ENCODE measurements at regions of chr10 and their contacts with region 1.

Region 1: GRCh38 chr10:132643709-132644526 is 106.3 kb downstream of the INPP5A start:
- DNase-seq: peak in 15 of 42 donors; percentile 2 to 62 (median 30)

Region 2: DNA sequence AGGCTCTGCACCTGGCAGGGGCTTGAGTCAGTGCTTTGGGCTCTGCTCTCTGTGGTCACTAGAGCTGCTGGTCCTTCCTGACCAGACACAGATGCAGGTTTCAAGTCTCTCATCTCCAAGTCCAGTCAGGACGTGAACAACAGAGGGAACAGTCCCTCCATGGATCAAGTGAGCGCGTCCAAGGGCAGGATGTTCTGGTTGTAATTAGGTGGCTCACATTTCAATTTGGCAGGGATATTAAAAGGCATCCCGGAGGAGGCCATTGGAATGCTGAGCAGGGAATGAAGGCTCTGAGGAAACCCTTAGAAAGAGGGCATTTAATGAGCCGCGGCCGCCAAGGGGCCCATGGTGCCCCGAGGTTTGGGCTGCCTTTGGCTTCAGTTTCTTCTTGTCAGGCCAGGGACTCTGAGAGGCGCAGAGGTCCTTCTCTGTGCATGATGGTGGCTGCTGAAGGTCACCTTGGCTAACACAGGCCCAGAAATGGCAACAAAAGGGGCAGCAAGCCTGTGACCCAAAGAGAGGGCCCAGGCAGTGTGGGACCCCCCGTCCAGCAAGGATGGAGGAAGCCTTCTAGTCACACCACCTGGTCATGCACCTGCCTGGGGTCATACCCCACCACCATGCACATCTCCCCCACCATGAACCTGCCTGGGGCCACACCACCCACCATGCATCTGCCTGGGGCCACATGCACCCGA is 137.1 kb before region 1 on chr10:
- intact Hi-C with region 1: no loop called
- DNase-seq: peak in 14 of 42 donors; percentile 12 to 57 (median 36)

Region 3: DNA sequence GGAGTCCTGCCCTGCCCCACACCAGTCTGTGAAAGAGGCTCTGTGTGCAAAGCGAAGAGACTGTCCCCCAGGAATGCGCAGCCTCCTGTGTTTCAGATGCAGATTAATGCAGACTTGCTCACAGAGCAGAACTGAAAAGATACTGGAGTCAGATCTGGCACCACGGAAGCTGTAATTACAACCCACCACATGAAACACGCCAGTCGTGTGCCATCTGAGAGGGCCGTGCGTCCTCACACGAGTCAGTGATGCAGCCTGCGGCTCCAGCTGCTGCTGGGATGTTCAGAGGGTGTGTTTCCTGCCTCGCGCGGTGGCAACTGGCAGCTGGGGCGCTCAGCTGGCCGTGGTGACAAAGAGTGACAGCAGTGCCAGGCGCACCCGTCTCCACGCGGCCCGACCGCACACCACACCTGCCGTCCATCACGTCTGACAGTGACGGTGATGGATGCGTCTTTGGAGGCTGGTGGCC is 92.0 kb after region 1 on chr10:
- intact Hi-C with region 1: loop called (anchors 5 kb)
- DNase-seq: peak; percentile 79 to 95 (median 88)

Region 4: DNA sequence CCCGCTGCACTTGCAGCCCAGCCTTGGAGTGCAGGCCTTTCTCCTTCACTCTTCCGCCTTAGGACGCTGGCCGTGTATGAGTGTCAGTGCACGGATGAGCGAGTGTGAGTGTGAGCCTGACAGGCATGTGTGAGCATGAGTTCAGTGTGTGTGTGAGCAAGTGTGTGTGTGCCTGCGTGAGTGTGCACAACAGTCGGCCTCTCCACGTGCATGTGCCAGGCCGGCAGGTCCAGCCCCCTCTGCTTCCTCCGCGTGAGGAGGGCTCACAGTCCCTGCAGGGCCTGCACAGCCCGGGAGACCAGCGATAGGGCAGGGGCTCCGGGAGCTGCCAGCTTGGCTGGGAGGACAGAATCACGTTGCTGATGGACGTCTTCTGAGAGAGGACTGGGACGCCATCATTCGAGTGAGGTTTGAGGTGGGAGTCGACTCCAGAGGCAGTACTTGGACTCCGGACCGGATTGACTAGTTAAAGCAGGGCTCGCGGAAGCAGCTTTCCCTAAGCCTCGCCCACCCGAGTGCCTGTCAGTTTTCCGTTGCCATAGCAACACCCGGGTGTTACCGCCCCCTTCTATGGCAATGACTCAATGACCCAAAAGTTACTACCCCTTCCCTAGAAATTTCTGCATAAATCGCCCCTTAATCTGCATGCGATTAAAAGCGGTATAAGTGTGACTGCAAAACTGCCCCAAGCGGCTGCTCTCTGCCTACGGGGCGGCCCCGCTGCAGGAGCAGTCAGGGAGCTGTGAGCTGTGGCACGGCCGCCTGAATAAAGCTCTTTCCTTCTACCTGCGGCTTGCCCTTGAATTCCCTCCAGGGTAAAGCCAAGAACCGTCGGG is 318.1 kb after region 1 on chr10:
- intact Hi-C with region 1: no loop called
- DNase-seq: peak; percentile 47 to 91 (median 77)

Measured in head of caudate nucleus (tissue), 42 donors.